ENCODE measurements at regions of chr13 and their contacts with region 1.

Region 1: DNA sequence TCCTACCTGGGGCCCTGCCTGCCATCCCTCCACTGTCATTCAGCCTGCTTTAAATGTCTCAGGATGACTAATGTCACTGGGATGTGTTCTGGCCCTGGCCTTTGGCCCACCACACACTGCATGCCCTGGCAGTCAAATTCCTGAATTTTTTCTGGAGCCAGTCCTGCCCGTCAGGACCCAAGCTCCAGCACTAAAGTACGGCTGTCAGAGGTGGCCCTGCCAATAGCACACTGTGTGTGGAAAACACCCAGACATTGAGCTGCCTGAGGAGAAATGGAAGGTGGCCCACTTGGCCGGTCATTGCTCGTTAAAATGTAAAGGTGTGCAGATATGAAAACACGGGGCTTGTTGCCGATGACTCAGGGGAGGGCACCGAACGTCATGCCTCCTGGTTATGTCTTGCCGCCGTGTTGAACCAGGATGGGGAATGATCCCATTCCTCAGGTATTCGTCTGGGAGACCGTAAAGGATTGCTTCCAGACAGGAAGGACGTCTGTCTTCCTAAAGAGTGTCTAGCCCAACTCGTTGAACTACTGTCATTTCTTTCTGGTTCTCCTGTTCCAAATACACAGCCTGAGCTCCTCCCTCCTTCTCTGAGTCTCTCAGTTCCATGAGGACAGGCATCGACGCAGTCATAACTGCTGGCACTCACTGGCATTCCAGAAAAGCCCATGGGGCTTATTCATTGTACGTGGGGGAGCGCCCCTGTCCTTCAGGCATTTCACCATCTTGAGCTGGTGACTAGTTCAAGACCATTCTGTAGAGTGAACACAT is 40.6 kb downstream of the COL4A2 start:
- DNase-seq: peak; percentile 46 to 48
- ATAC-seq: peak; percentile 53 to 84 (median 72)
- H3K4me3 ChIP-seq: no peak overlapping the region
- H3K27ac ChIP-seq: peak overlapping the region; percentile 14 to 82 (median 70)
- H3K4me1 ChIP-seq: peaks cover 25 to 85% (median 61%) of the 10 kb centered on the region in 9 donors
- H3K27me3 ChIP-seq: no peaks in the 10 kb centered on the region
- CTCF ChIP-seq: no peak

Region 2: DNA sequence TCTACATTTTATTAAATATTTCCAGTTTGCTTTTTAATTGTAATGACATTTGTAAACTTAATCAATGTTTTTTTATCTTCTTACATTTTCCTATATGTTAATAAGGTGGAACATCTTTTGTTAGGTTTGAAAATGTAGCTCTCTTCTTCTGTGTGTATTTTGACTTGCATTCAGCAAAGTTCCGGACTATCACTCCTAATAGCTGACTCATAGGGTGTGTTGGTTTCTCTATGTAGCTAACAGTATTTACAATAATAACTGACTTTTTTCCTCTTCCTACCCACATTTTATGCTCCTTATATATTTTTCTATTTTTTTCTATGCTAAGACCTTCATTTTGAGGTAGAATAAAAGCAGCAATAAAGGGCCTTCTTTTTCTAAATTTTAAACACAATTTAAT is 1690.2 kb before region 1 on chr13:
- intact Hi-C with region 1: no loop called
- DNase-seq: no peak
- ATAC-seq: no peak
- H3K4me3 ChIP-seq: no peak overlapping the region
- H3K27ac ChIP-seq: no peak overlapping the region
- H3K4me1 ChIP-seq: no peaks in the 10 kb centered on the region
- H3K27me3 ChIP-seq: no peaks in the 10 kb centered on the region
- CTCF ChIP-seq: no peak

Region 3: DNA sequence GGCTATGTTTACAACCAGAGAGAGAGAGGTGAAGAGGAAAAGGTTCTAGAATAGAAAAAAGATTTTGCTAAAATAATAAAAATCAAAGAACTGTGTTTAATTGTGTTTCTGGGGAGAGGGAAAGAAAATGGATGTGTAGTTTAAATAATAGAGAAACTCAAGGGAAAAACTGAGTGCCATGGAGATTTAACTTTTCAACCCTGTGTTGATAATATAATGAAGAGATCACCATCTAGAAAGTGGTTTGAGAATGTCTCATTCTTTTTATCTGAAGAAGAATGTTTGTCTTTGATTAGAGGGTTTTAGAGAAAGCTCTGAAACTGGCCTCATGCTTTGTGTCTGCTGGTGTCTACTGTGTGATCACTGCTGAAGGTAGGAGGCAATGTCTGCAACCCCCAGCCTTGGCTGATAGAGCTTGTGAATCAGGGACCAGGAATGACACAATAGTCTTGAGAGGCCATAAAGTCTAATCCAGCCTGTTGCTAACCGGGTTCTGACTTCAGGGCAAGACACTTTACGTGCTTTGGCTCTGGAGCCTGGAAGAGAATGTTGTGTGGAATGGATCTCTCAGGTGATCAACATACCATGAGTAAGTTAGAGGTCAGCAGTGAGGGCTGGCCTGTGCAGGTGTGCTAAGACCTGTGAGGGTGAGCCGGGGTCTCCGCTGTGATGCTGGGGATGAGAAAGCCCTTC is 35.2 kb before region 1 on chr13:
- intact Hi-C with region 1: loop called in 1 of 10 experiments (anchors 5 kb)
- DNase-seq: no peak
- ATAC-seq: peak in 1 of 8 donors; percentile 16
- H3K4me3 ChIP-seq: peak overlapping the region in 7 of 10 donors; percentile 81 to 96 (median 95)
- H3K27ac ChIP-seq: peak overlapping the region in 9 of 10 donors; percentile 54 to 99 (median 97)
- H3K4me1 ChIP-seq: peaks cover 46 to 88% (median 79%) of the 10 kb centered on the region in 9 donors
- H3K27me3 ChIP-seq: peaks cover 0 to 46% (median 0%) of the 10 kb centered on the region in 7 donors
- CTCF ChIP-seq: peak in 1 of 9 donors; percentile 13